Natural killer cell (primary cell): ENCODE measurements at regions of chr1 and their contacts with region 1.

Region 1: GRCh38 chr1:25338188-25338981 is at the start of gene TMEM50A:
- DNase-seq: peak; percentile 89 to 93
- ATAC-seq: peak; percentile 71 to 92 (median 77)
- H3K4me3 ChIP-seq: peak within 1 kb of the TSS; percentile 99
- H3K4me3 Mint-ChIP-seq: peak within 1 kb of the TSS; percentile 94
- H3K27ac ChIP-seq: peak within 1 kb of the TSS; percentile 98
- H3K27ac Mint-ChIP-seq: peak within 1 kb of the TSS; percentile 92 to 97
- H3K4me1 ChIP-seq: peaks cover 8% of the 10 kb centered on the region
- H3K4me1 Mint-ChIP-seq: peaks cover 31 to 46% of the 10 kb centered on the region in 2 donors
- H3K27me3 ChIP-seq: no peaks in the 10 kb centered on the region
- H3K27me3 Mint-ChIP-seq: no peaks in the 10 kb centered on the region
- CTCF ChIP-seq: no peak
- total RNA-seq, gene TMEM50A: 99.9 to 117 (median 107) TPM

Region 2: DNA sequence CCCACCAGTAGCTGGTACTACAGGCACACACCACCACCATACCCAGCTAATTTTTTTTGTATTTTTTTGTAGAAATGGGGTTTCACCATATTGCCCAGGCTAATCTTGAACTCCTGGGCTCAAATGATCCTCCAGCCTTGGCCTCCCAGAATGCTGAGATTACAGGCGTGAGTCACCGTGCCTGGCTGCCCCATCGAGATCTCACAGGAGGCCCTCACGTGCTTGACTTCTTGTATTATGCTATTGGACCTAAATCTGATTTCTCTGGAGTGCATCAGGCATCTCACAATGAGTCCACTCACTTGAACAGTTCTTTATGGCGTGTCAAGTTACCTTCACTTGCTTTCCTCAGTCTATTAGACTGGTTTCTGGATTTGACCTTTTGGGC is 81.8 kb before region 1 on chr1:
- intact Hi-C with region 1: loop called (anchors 5 kb)
- DNase-seq: peak in 1 of 2 donors; percentile 1
- ATAC-seq: no peak
- H3K4me3 ChIP-seq: no peak overlapping the region
- H3K4me3 Mint-ChIP-seq: no peak overlapping the region
- H3K27ac ChIP-seq: no peak overlapping the region
- H3K27ac Mint-ChIP-seq: no peak overlapping the region
- H3K4me1 ChIP-seq: no peaks in the 10 kb centered on the region
- H3K4me1 Mint-ChIP-seq: peaks cover 0 to 9% of the 10 kb centered on the region in 2 donors
- H3K27me3 ChIP-seq: no peaks in the 10 kb centered on the region
- H3K27me3 Mint-ChIP-seq: no peaks in the 10 kb centered on the region
- CTCF ChIP-seq: no peak

Region 3: DNA sequence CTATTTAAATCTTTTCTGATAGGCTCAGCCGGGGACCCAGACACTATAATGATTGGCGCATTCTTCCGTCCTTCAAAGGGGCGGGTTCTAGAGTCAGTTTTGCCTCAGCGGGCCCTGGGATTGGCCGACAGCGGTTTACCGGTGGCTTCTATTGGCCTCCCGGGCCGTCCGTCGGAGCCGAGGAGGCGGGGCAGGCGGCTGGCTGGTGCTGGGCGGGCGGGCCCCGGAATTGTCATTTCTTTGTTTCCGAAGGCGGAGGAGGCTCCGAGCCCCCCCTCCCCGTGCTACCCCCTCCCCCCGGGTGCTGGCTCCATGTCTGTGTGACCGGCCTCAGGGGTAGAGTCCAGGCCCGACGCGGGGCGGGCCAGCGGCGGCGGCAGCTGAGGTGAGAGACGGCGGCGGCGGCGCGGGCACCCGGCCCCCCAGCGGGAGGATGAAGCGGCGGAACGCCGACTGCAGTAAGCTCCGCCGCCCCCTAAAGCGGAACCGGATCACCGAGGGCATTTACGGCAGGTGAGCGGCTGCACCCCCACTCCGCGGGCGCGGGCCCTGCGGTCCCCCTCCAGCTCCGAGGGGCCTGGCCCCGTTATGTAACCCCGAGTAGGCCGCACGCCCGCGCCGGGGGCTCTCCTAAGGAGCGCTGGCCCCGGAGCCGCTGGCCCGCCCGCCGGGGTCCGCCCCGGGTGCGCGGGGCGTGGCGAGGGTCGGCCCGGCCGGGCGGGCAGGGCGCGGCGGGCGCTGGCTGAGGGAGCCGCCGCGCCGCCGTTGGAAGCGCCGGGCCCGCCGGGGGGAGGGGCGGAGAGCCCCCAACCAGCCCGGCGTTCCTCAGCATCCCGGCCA is 92.5 kb after region 1 on chr1 and contains the start of gene MACO1:
- intact Hi-C with region 1: loop called (anchors 5 kb)
- DNase-seq: peak; percentile 97 to 98
- ATAC-seq: peak; percentile 81 to 93 (median 83)
- H3K4me3 ChIP-seq: peak within 1 kb of the TSS; percentile 100
- H3K4me3 Mint-ChIP-seq: peak within 1 kb of the TSS; percentile 98
- H3K27ac ChIP-seq: peak within 1 kb of the TSS; percentile 100
- H3K27ac Mint-ChIP-seq: peak within 1 kb of the TSS; percentile 99 to 100
- H3K4me1 ChIP-seq: peaks cover 7% of the 10 kb centered on the region
- H3K4me1 Mint-ChIP-seq: peaks cover 43 to 45% of the 10 kb centered on the region in 2 donors
- H3K27me3 ChIP-seq: no peaks in the 10 kb centered on the region
- H3K27me3 Mint-ChIP-seq: no peaks in the 10 kb centered on the region
- CTCF ChIP-seq: no peak
- total RNA-seq, gene MACO1: 15.9 to 19.6 (median 16.9) TPM

Region 4: DNA sequence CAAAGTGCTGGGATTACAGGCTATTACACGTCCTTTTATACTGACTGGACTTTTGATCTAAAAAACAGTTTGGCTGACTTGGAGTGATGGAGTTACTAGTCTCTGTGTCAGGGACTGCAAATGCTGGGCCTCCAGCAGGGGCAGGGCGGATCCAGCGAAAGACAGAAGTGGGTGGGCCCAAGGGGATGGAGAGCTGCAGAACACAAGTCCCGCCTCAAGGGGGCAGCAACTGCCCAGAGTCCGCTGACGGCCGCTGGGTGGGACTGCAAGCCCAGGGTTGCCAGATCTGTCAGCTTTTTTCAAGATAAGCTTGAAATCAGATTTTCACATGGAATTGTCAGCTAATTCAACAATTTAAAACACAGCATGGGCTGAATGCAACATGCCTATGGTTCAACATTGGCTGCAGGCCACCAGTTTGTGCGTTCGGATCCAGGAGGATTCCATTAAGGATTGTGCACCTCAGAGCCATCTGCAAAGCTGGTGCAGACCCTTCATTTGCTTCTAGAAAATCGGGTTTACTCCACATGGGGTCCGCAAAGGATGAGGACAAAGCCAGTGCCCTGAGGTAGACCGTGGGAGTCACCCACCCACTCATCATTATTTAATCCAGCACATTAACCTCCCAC is 557.1 kb after region 1 on chr1:
- intact Hi-C with region 1: no loop called
- DNase-seq: peak; percentile 88 to 97
- ATAC-seq: peak; percentile 100
- H3K4me3 ChIP-seq: no peak overlapping the region
- H3K4me3 Mint-ChIP-seq: no peak overlapping the region
- H3K27ac ChIP-seq: no peak overlapping the region
- H3K27ac Mint-ChIP-seq: peak overlapping the region in 1 of 2 donors; percentile 69
- H3K4me1 ChIP-seq: peaks cover 10% of the 10 kb centered on the region
- H3K4me1 Mint-ChIP-seq: peaks cover 8 to 9% of the 10 kb centered on the region in 2 donors
- H3K27me3 ChIP-seq: no peaks in the 10 kb centered on the region
- H3K27me3 Mint-ChIP-seq: no peaks in the 10 kb centered on the region
- CTCF ChIP-seq: peak; percentile 98